CD14-positive monocyte (primary cell): ENCODE measurements at regions of chr7 and their contacts with region 1.

Region 1: GRCh38 chr7:74026903-74027551 is 946 bp upstream of the ELN start:
- DNase-seq: peak; percentile 34 to 46 (median 42)
- H3K4me3 ChIP-seq: no peak overlapping the region
- H3K4me3 Mint-ChIP-seq: peak overlapping the region in 1 of 2 donors; percentile 67
- H3K27ac ChIP-seq: no peak overlapping the region
- H3K27ac Mint-ChIP-seq: no peak overlapping the region
- H3K4me1 ChIP-seq: peaks cover 2 to 14% of the 10 kb centered on the region in 2 donors
- H3K4me1 Mint-ChIP-seq: peaks cover 9% of the 10 kb centered on the region
- H3K27me3 ChIP-seq: peaks cover 36 to 60% of the 10 kb centered on the region in 2 donors
- H3K27me3 Mint-ChIP-seq: peaks cover 60 to 89% (median 70%) of the 10 kb centered on the region in 3 donors
- CTCF ChIP-seq: peak; percentile 99

Region 2: DNA sequence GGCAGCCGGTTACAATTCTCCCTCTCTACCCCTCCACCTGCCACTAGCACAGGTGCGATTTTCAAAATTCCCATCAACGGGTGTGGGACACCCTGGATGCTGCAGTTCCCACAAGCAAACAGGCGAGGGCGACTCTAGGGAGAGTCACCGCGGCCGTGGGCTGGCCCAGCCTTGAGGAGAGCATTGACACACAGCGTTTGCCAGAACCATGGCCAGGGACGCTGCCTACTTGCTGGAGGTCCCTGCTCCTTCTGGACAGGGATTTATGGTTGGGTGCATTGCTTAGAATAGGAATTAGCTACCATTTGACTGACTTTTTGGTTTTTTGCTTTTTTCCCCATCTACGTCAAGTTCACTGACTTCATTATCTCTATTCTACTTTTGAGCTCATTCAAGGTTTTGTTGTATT is 215.3 kb before region 1 on chr7:
- intact Hi-C with region 1: loop called in 1 of 2 experiments (anchors 10 kb)
- DNase-seq: peak; percentile 36 to 63 (median 59)
- H3K4me3 ChIP-seq: no peak overlapping the region
- H3K4me3 Mint-ChIP-seq: no peak overlapping the region
- H3K27ac ChIP-seq: no peak overlapping the region
- H3K27ac Mint-ChIP-seq: no peak overlapping the region
- H3K4me1 ChIP-seq: no peaks in the 10 kb centered on the region
- H3K4me1 Mint-ChIP-seq: no peaks in the 10 kb centered on the region
- H3K27me3 ChIP-seq: peaks cover 0 to 3% of the 10 kb centered on the region in 2 donors
- H3K27me3 Mint-ChIP-seq: peaks cover 9 to 15% (median 14%) of the 10 kb centered on the region in 3 donors
- CTCF ChIP-seq: peak; percentile 88

Region 3: GRCh38 chr7:73865738-73866445 is 161.1 kb before region 1 on chr7:
- intact Hi-C with region 1: loop called (anchors 1 to 2 kb)
- DNase-seq: peak in 2 of 3 donors; percentile 29 to 31
- H3K4me3 ChIP-seq: no peak overlapping the region
- H3K4me3 Mint-ChIP-seq: no peak overlapping the region
- H3K27ac ChIP-seq: no peak overlapping the region
- H3K27ac Mint-ChIP-seq: no peak overlapping the region
- H3K4me1 ChIP-seq: no peaks in the 10 kb centered on the region
- H3K4me1 Mint-ChIP-seq: no peaks in the 10 kb centered on the region
- H3K27me3 ChIP-seq: no peaks in the 10 kb centered on the region
- H3K27me3 Mint-ChIP-seq: peaks cover 2 to 8% (median 6%) of the 10 kb centered on the region in 3 donors
- CTCF ChIP-seq: peak; percentile 69